AG04449 (cell line): ENCODE measurements at regions of chr10 and their contacts with region 1.

Region 1: DNA sequence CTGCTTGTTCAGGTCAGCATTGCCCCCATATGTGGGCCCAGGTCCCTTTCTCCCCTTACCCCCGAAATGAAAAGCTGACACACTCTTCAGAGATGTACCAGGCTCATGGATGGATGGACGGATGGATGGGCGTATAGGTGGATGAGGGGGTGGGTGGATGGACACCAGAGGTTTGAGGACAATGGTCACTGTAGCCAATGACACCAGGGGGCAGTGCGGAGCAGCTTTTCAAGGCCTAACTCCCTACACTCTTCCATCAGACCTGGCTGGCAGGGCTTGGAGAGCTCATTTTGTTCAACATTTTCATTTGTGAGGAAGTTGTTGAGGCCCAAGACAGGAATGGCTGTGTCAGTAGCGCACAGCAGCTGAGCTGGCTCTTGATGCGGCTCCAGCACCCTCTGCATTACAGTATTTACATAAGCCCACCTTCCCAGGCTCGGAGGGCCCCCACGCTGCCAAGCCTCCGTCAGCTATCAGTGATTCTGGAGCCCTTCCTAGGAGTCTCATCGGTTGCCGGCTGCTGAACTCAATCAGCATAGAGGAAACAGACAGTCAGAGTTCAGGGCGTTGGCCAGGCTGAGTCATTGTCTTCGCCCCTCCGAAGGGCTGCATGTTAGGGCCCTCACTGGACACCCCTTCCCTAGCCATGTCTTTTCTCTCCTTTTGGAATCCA is 11.6 kb upstream of the FFAR4 start:
- DNase-seq: no peak
- H3K4me3 ChIP-seq: no peak overlapping the region
- CTCF ChIP-seq: peak; percentile 80

Region 2: GRCh38 chr10:93541402-93542357 is 13.2 kb before region 1 on chr10:
- CTCF ChIA-PET with region 1: interaction called, 16 read pairs
- POLR2A ChIA-PET with region 1: no interaction called
- DNase-seq: no peak
- H3K4me3 ChIP-seq: no peak overlapping the region
- CTCF ChIP-seq: peak; percentile 86

Region 3: DNA sequence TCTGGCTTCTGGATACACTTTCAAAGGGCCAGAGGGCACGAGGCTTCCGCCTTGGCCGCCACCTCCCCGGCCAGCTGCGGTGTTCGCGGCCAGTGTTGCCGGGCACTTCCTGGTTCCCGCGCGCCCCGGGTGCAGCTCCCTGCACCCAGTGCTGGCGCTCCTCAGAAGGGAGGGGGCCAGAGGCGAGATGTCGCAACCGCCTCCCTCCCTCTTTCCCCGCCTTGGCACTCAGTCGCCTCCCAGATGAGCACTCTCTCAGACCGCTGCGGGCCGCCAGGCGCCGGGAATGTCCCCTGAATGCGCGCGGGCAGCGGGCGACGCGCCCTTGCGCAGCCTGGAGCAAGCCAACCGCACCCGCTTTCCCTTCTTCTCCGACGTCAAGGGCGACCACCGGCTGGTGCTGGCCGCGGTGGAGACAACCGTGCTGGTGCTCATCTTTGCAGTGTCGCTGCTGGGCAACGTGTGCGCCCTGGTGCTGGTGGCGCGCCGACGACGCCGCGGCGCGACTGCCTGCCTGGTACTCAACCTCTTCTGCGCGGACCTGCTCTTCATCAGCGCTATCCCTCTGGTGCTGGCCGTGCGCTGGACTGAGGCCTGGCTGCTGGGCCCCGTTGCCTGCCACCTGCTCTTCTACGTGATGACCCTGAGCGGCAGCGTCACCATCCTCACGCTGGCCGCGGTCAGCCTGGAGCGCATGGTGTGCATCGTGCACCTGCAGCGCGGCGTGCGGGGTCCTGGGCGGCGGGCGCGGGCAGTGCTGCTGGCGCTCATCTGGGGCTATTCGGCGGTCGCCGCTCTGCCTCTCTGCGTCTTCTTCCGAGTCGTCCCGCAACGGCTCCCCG is 11.8 kb after region 1 on chr10 and contains the start of gene FFAR4:
- CTCF ChIA-PET with region 1: interaction called, 11 read pairs
- POLR2A ChIA-PET with region 1: no interaction called
- DNase-seq: no peak
- H3K4me3 ChIP-seq: no peak within 1 kb of the TSS
- CTCF ChIP-seq: no peak

Region 4: GRCh38 chr10:93680412-93681047 is 125.6 kb after region 1 on chr10:
- CTCF ChIA-PET with region 1: interaction called, 136 read pairs
- POLR2A ChIA-PET with region 1: no interaction called
- DNase-seq: no peak
- H3K4me3 ChIP-seq: no peak overlapping the region
- CTCF ChIP-seq: peak; percentile 3

Region 5: GRCh38 chr10:93859049-93859655 is 304.3 kb after region 1 on chr10:
- CTCF ChIA-PET with region 1: interaction called, 35 read pairs
- POLR2A ChIA-PET with region 1: no interaction called
- DNase-seq: no peak
- H3K4me3 ChIP-seq: no peak overlapping the region
- CTCF ChIP-seq: no peak